Lower leg skin (tissue), 4 donors: ENCODE measurements at regions of chr2 and their contacts with region 1.

Region 1: GRCh38 chr2:151754253-151754897 is 20.1 kb upstream of the NEB start:
- DNase-seq: no peak
- H3K4me3 ChIP-seq: no peak overlapping the region
- CTCF ChIP-seq: no peak
- POLR2A ChIP-seq: no peak

Region 2: DNA sequence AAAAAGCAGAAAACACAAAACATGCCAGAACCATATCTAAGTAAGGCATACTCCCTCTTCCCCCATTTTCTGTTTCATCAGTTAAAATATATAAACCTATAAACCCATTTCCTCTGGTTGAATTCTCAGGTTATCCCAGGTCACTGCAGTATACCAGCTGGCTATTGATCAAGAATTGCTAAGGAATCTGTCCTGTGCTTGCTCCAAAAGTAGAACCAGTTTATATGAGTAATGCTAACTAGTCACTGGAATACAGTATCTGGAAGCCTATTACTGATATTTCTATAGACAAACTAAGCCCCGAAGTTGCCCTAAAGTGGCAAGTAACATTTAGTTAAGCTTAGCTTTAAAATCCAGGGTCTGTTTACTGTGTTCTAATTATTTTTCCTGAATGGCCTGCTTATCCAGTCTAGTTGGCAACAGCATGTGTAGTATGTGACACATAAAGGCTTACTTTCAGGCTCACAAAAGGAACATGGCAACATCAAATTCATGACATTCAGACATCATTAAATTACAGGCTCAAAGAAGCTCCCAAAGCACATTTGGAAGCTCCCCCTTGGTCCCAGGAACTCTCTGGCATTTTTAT is 176.7 kb after region 1 on chr2:
- intact Hi-C with region 1: no loop called
- DNase-seq: no peak
- H3K4me3 ChIP-seq: no peak overlapping the region
- CTCF ChIP-seq: no peak
- POLR2A ChIP-seq: no peak

Region 3: DNA sequence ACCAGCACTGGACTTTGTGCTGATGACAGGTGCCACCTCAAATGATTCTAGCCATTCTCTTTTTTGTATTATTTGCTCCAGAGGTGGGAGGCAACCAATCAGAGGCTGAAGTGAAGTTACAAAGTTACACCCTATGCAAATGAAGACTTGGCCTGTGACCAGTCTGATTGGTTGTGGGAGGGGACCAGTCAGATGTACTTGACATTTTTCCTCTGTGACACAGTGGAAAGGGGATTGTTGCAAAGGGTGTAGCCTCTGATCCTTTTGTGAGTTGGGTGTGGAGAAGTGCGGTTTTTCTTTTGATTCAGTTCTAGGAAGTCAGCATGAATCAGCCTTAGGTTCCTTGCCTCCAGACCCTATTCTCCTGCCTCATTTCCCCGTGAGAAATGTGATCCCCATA is 1208.1 kb after region 1 on chr2:
- intact Hi-C with region 1: no loop called
- DNase-seq: no peak
- H3K4me3 ChIP-seq: no peak overlapping the region
- CTCF ChIP-seq: no peak
- POLR2A ChIP-seq: no peak

Region 4: DNA sequence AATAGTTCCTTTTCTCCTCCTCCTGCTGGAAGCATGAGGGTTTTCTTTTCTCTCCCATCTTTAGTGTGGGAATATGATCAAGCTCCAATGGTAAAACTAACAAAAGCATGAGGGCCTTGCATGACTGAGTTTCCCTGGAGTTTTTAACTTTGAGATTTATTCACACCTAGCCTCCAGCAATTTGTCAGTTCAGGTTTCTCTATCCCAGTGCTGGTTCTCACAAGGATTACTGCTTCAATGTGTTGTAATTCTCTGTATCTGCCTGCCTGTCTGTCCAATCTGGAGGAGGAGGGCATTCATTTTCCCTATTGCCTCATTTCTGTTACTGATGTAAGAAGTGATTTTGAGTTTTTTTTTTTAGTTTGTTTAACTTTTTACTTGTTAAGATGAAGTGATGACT is 1781.7 kb after region 1 on chr2:
- intact Hi-C with region 1: loop called (anchors 10 kb)
- DNase-seq: no peak
- H3K4me3 ChIP-seq: no peak overlapping the region
- CTCF ChIP-seq: no peak
- POLR2A ChIP-seq: no peak